Activated naive CD4-positive, alpha-beta T cell treated with anti-CD3 and anti-CD28 coated beads for 36 hours (primary cell): ENCODE measurements at regions of chr15 and their contacts with region 1.

Region 1: DNA sequence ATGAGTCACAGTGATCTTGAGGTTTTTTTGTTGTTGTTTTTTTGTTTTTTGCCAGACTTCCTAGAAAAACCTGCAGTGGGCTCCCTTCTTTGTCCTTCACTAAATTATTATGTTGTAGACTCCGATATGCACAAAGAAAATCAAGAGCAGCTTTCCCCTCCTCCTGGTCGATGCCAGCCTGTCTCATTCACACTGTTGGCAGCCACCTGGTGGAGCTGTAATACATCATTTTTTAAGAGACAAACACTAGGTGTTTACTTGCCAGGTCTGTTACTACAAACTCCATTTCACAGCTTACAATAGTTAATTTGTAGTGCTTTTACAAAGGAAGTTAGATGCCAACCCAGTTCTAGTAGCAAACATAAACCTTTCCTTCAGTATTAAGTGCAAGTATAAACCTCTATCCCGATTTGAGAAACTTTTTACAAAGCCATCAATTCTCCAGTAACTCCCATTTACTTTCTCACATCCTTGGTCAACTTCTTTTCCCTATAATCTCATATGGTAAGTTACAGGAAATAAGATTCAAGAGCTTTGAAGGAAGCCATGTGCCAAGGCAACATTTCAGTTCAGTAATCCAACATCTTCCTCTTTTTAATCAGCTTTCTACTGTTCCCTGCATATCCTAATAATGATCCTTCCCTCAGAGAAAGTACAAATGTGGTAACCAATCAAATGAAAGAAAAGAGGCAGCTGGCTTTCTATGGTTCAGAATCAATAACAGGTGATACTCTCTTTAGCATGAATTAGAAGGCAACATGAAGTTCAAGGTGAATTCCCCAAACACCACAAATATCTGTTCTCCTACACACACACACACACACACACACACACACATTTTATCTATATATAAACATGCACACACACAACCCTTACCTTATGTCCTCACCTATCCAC is 14.0 kb downstream of the AAGAB start:
- DNase-seq: peak; percentile 48
- H3K4me3 Mint-ChIP-seq: peak overlapping the region; percentile 5
- H3K27ac Mint-ChIP-seq: peak overlapping the region; percentile 87
- H3K4me1 Mint-ChIP-seq: peaks cover 45% of the 10 kb centered on the region
- H3K27me3 Mint-ChIP-seq: no peaks in the 10 kb centered on the region

Region 2: GRCh38 chr15:66946578-66947164 is 293.8 kb before region 1 on chr15:
- CTCF ChIA-PET with region 1: interaction called, 5 read pairs
- intact Hi-C with region 1: loop called (anchors 5 kb)
- DNase-seq: peak; percentile 85
- H3K4me3 Mint-ChIP-seq: no peak overlapping the region
- H3K27ac Mint-ChIP-seq: no peak overlapping the region
- H3K4me1 Mint-ChIP-seq: no peaks in the 10 kb centered on the region
- H3K27me3 Mint-ChIP-seq: no peaks in the 10 kb centered on the region

Region 3: DNA sequence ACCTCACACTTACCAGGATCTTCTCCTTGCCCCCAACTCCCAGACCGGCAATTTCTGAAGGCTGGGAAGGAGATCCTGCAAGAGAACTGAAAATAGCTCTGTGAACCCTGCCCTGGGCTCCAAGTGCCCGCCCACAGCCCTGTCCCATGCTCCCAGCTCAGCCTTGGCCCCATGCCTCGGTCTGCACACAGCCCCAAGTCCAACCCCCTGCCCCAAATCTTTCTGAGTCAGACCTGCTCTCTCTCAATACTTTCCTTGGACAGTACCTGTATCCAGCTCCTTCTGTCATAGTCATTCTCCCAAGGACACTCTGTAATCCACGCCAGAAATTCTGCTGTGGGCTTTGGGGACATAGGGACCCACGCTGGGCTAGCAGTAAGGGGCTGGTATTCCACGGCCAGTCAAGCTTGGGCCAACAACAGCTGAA is 181.3 kb before region 1 on chr15:
- CTCF ChIA-PET with region 1: no interaction called
- intact Hi-C with region 1: no loop called
- DNase-seq: no peak
- H3K4me3 Mint-ChIP-seq: no peak overlapping the region
- H3K27ac Mint-ChIP-seq: no peak overlapping the region
- H3K4me1 Mint-ChIP-seq: peaks cover 24% of the 10 kb centered on the region
- H3K27me3 Mint-ChIP-seq: peaks cover 11% of the 10 kb centered on the region

Region 4: DNA sequence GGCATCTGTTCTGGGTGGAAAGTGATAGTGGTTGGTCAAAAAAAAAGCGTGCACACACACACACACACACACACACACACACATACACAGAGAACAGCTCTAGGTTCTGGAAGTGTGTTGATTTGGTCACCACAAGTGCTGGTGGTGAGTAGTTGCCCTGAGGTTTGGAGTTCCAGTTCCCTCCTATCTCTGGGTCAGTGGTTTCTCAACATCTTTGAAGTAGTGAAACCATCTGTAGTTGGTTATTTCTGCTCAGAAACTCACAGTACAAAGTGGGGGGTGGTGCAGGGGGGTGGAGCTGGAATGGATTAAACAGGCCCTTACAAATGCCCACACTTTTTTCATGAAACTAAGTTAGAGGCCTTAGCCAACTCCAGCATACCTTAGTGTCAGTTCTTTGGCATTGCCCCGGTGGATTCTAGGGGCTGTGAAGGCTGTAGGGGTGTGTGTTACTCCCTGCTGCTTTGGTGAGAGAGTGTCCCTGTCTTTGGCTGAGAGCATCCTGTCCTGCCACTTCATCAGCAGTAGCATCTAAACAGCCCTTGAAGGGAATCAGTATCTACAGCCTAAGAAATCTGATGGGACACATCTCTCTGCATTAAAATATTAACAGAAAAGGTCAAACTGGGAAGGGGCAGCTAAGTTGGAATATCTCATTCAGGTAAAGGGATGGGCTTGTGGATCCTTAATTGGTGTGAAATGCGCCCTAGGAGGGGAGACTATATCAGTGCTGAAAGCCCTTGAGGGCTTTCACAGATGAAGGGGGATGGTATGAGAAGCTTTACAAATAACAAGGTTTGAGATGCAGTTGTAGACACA is 154.5 kb before region 1 on chr15:
- CTCF ChIA-PET with region 1: interaction called, 4 read pairs
- intact Hi-C with region 1: loop called (anchors 1 kb)
- DNase-seq: peak; percentile 44
- H3K4me3 Mint-ChIP-seq: no peak overlapping the region
- H3K27ac Mint-ChIP-seq: peak overlapping the region; percentile 78
- H3K4me1 Mint-ChIP-seq: peaks cover 88% of the 10 kb centered on the region
- H3K27me3 Mint-ChIP-seq: no peaks in the 10 kb centered on the region

Region 5: GRCh38 chr15:67150028-67150860 is 90.2 kb before region 1 on chr15:
- CTCF ChIA-PET with region 1: no interaction called
- intact Hi-C with region 1: loop called (anchors 1 kb)
- DNase-seq: peak; percentile 72
- H3K4me3 Mint-ChIP-seq: peak overlapping the region; percentile 59
- H3K27ac Mint-ChIP-seq: peak overlapping the region; percentile 91
- H3K4me1 Mint-ChIP-seq: peaks cover 67% of the 10 kb centered on the region
- H3K27me3 Mint-ChIP-seq: no peaks in the 10 kb centered on the region

Region 6: DNA sequence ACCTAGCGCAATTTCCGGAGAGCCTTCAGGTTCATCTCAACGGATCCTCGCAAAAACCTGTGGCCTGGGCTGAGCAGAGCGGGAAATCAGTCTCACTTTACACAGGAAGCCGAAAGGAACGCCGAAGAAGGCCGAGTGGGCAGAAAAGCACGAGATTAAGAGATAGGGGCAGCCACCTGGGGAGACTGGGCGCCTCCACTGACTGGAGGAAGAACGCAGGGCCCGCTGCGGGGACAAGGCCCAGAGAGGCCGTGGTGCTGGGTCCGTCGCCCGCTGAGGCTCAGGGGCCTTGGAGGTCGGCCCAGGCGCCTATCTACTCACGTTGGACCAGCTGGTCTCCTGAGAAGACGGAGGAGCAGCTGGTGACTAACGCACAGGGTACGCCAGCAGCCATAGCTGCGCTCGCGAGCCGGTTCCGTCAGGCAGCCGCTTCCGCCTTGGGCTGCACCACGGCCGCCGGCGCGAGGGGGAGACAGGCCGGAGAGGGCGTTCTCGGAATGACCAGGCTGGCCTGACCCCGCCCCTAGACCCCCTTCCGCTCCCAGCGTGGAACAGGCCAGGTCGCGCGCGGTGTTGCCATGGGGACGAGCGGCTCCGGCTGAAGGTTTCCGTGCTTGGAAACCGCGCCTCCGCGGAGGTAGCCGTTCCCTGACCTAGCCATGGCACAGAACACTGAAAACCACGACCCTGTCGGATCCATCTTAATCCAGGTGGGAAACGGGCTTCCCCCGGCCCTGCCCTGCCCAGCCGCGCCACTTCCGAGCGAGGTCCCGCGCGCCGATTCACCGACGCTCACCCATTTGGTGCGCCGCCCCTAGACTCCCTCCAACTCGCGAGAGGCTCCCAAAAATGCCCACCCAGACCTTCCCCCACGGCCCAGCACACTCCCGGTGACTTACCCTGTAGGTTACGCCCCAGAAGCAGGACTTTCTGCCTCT is 14.0 kb after region 1 on chr15 and contains the starts of genes AAGAB and IQCH:
- CTCF ChIA-PET with region 1: interaction called, 6 read pairs
- intact Hi-C with region 1: loop called (anchors 1 kb)
- DNase-seq: peak; percentile 97
- H3K4me3 Mint-ChIP-seq: peak within 1 kb of the TSS; percentile 100
- H3K27ac Mint-ChIP-seq: peak within 1 kb of the TSS; percentile 96
- H3K4me1 Mint-ChIP-seq: peaks cover 38% of the 10 kb centered on the region
- H3K27me3 Mint-ChIP-seq: no peaks in the 10 kb centered on the region
- total RNA-seq, gene AAGAB: 47.2 to 48.8 TPM
- total RNA-seq, gene IQCH: 0.98 to 1.4 TPM

Region 7: GRCh38 chr15:67433495-67434099 is 193.1 kb after region 1 on chr15:
- CTCF ChIA-PET with region 1: interaction called, 3 read pairs
- intact Hi-C with region 1: loop called (anchors 5 kb)
- DNase-seq: peak; percentile 51
- H3K4me3 Mint-ChIP-seq: no peak overlapping the region
- H3K27ac Mint-ChIP-seq: no peak overlapping the region
- H3K4me1 Mint-ChIP-seq: no peaks in the 10 kb centered on the region
- H3K27me3 Mint-ChIP-seq: no peaks in the 10 kb centered on the region

Region 8: DNA sequence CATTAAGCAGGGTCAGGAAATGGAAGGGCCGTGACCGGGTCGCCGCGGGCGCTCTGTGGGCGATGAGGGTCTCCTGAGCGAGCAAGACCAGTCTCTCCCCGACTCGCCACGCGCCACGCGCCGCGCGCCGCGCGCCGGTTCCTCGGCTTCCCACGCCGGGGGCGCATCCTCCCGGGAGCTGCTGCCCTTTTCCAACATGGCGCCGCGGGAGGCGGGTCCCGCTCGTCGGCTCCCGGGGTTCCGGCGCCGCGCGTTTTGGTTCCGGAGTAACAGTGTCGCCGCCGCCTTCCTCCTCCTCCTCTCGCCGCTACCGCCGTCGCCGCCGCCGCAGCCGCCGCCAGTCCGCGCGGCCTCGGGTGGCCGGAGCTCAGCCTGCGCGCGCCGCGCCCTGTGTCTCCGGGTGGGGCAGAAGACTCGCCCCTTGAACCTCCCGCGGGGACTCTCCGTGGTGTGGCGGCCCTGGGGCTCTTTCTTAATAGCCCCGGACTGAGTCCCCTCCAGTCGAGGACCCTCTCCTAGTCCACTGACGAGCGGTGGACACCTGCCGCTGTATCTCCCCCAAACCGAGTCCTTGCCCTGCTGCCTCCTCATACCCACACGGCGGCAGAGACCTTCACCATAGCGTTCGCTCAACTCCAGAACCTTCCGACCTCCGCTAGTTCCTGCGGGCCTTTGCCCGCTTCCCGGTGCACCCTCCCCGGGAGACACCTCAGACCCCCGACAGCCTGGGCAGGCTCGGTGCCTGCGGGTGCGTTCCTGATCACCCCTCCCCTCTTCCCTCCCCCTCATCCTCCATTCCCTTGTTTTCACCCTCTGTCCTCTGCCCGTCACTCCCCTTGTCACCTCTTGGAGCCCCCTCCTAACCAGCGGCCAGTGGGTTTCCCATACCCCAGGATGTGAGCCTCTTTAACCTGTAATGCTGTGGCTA is 302.2 kb after region 1 on chr15 and contains the start of gene MAP2K5:
- CTCF ChIA-PET with region 1: no interaction called
- intact Hi-C with region 1: loop called (anchors 5 kb)
- DNase-seq: peak; percentile 84
- H3K4me3 Mint-ChIP-seq: peak within 1 kb of the TSS; percentile 91
- H3K27ac Mint-ChIP-seq: peak within 1 kb of the TSS; percentile 95
- H3K4me1 Mint-ChIP-seq: peaks cover 47% of the 10 kb centered on the region
- H3K27me3 Mint-ChIP-seq: no peaks in the 10 kb centered on the region
- total RNA-seq, gene MAP2K5: 15.4 to 20.6 TPM

Region 9: GRCh38 chr15:67690936-67691335 is 450.5 kb after region 1 on chr15:
- CTCF ChIA-PET with region 1: no interaction called
- intact Hi-C with region 1: no loop called
- DNase-seq: no peak
- H3K4me3 Mint-ChIP-seq: no peak overlapping the region
- H3K27ac Mint-ChIP-seq: no peak overlapping the region
- H3K4me1 Mint-ChIP-seq: no peaks in the 10 kb centered on the region
- H3K27me3 Mint-ChIP-seq: no peaks in the 10 kb centered on the region